Spleen (tissue), 13 donors: ENCODE measurements at regions of chr7 and their contacts with region 1.

Region 1: DNA sequence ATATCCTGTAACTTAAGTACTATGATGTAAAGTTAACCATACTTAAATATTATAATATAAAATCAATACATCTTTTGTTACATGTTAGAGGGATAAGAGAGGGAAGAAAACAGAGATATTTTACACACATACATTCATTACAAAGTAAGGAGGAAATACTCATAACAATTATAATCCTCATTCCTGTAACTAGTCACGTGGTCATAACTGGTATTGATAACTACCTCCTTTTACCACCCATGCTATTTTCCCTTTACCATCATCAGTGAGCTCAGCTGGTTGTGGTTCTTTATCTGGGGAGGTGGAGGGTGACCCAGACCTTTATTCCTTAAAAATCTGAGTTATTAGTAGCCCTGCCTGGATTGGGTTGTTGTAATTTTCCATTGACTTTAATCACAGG is 8.3 kb downstream of the GIMAP8 start:
- DNase-seq: no peak
- H3K4me3 ChIP-seq: no peak overlapping the region
- H3K27ac ChIP-seq: peak overlapping the region in 1 of 8 donors; percentile 28
- H3K4me1 ChIP-seq: peaks cover 0 to 43% (median 16%) of the 10 kb centered on the region in 6 donors
- H3K27me3 ChIP-seq: no peaks in the 10 kb centered on the region
- CTCF ChIP-seq: no peak
- POLR2A ChIP-seq: no peak

Region 2: GRCh38 chr7:150531704-150532103 is 72.9 kb after region 1 on chr7:
- intact Hi-C with region 1: no loop called
- DNase-seq: no peak
- H3K4me3 ChIP-seq: no peak overlapping the region
- H3K27ac ChIP-seq: no peak overlapping the region
- H3K4me1 ChIP-seq: no peaks in the 10 kb centered on the region
- H3K27me3 ChIP-seq: no peaks in the 10 kb centered on the region
- CTCF ChIP-seq: no peak
- POLR2A ChIP-seq: no peak

Region 3: GRCh38 chr7:150570556-150571465 is 112.1 kb after region 1 on chr7:
- intact Hi-C with region 1: loop called (anchors 5 kb)
- DNase-seq: no peak
- H3K4me3 ChIP-seq: peak overlapping the region in 4 of 8 donors; percentile 55 to 76 (median 63)
- H3K27ac ChIP-seq: peak overlapping the region in 5 of 8 donors; percentile 82 to 93 (median 90)
- H3K4me1 ChIP-seq: peaks cover 10 to 59% (median 28%) of the 10 kb centered on the region in 6 donors
- H3K27me3 ChIP-seq: no peaks in the 10 kb centered on the region
- CTCF ChIP-seq: no peak
- POLR2A ChIP-seq: no peak